Heart left ventricle (tissue), 16 donors: ENCODE measurements at regions of chr15 and their contacts with region 1.

Region 1: DNA sequence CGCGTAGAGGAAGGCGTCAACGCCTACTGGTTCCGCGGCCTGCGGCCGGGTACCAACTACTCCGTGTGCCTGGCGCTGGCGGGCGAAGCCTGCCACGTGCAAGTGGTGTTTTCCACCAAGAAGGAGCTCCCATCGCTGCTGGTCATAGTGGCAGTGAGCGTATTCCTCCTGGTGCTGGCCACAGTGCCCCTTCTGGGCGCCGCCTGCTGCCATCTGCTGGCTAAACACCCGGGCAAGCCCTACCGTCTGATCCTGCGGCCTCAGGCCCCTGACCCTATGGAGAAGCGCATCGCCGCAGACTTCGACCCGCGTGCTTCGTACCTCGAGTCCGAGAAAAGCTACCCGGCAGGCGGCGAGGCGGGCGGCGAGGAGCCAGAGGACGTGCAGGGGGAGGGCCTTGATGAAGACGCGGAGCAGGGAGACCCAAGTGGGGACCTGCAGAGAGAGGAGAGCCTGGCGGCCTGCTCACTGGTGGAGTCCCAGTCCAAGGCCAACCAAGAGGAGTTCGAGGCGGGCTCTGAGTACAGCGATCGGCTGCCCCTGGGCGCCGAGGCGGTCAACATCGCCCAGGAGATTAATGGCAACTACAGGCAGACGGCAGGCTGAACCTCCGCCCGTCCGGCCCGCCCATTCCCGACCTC is 4.1 kb downstream of the ISLR2 start:
- DNase-seq: peak; percentile 34 to 68 (median 54)
- ATAC-seq: peak in 2 of 4 donors; percentile 42 to 44
- H3K4me3 ChIP-seq: no peak overlapping the region
- H3K27ac ChIP-seq: peak overlapping the region in 2 of 12 donors; percentile 73 to 97
- H3K4me1 ChIP-seq: peaks cover 0 to 68% (median 32%) of the 10 kb centered on the region in 12 donors
- H3K27me3 ChIP-seq: peaks cover 9 to 96% (median 56%) of the 10 kb centered on the region in 9 donors
- CTCF ChIP-seq: peak; percentile 17 to 59 (median 40)
- POLR2A ChIP-seq: no peak

Region 2: GRCh38 chr15:73972984-73973682 is 161.4 kb before region 1 on chr15:
- intact Hi-C with region 1: loop called in 6 of 10 experiments (anchors 5 to 10 kb)
- DNase-seq: peak; percentile 83 to 90 (median 87)
- ATAC-seq: peak; percentile 85 to 95 (median 92)
- H3K4me3 ChIP-seq: peak overlapping the region in 9 of 12 donors; percentile 12 to 43 (median 32)
- H3K27ac ChIP-seq: peak overlapping the region in 1 of 12 donors; percentile 13
- H3K4me1 ChIP-seq: peaks cover 0 to 12% (median 8%) of the 10 kb centered on the region in 12 donors
- H3K27me3 ChIP-seq: peaks cover 0 to 6% (median 0%) of the 10 kb centered on the region in 9 donors
- CTCF ChIP-seq: peak; percentile 69 to 94 (median 84)
- POLR2A ChIP-seq: no peak

Region 3: DNA sequence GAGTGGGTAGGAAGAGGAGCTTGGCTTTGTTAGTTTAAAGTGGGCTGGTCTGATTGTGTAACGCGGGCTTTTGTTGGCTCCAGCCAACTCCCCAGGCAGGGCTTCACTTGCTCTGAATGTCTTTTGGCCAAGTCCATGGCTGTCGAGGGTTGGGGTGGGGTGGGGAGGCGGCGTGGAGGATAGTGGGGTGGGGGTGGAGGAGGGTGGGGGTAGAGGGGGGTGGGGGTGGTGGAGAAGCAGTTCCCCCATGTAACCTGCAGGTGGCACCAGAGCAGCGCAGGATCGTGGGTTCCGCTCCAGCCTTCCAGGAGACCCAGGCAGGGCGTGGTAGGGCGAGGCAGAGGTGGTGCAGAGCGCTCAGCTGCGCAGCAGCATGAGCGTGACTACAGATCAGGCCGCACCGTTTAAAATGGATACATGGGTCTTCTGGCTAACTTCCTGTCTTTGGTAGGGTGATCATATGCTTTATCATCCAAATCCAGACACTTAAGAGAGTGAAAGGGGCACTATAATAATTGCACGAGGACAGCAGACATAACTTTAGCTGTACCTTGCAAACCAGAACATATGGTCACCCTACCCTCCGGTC is 80.5 kb before region 1 on chr15:
- intact Hi-C with region 1: loop called in 2 of 10 experiments (anchors 5 to 10 kb)
- DNase-seq: peak; percentile 68 to 88 (median 77)
- ATAC-seq: peak; percentile 46 to 85 (median 72)
- H3K4me3 ChIP-seq: peak overlapping the region in 2 of 12 donors; percentile 25 to 32
- H3K27ac ChIP-seq: peak overlapping the region in 3 of 12 donors; percentile 29 to 52 (median 48)
- H3K4me1 ChIP-seq: peaks cover 0 to 38% (median 24%) of the 10 kb centered on the region in 12 donors
- H3K27me3 ChIP-seq: no peaks in the 10 kb centered on the region
- CTCF ChIP-seq: peak; percentile 38 to 84 (median 59)
- POLR2A ChIP-seq: no peak

Region 4: DNA sequence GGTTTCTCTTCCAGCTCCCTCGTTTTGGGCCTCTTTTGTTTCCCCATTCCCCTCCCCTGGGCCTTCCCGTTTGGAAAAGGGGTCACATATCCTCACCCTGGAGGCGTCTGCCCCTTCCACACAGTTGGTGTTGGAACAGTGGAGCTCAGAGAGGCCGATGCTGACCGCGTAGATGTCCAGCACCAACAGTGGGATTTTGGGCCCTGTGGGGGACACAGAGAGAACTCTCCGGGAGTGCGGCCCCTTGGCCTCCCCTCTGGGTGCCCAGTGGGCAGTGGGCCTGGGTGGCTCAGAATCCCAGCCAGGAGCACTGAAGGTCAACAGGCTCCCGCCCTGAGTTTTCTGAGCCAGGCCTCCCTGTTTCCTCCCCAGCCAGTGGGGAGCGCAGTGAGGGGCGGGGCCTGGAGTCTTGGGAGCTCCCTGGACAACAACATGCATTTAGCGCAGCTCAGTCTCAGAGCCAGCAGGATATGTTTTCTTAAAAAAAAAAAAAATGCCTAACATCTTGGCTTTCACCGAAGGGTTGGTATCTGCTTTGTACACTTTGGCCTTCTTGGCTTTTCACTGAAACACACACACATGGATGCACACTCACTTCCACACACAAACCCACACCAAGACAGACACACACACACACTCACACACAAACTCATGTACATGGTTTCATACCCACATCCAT is 38.3 kb after region 1 on chr15:
- intact Hi-C with region 1: loop called in 6 of 10 experiments (anchors 2 to 5 kb)
- DNase-seq: peak; percentile 75 to 88 (median 84)
- ATAC-seq: peak; percentile 65 to 84 (median 68)
- H3K4me3 ChIP-seq: peak overlapping the region in 5 of 12 donors; percentile 44 to 57 (median 54)
- H3K27ac ChIP-seq: peak overlapping the region; percentile 49 to 94 (median 84)
- H3K4me1 ChIP-seq: peaks cover 0 to 86% (median 44%) of the 10 kb centered on the region in 12 donors
- H3K27me3 ChIP-seq: no peaks in the 10 kb centered on the region
- CTCF ChIP-seq: peak in 2 of 12 donors; percentile 16 to 33
- POLR2A ChIP-seq: no peak

Region 5: GRCh38 chr15:74179341-74179841 is 44.9 kb after region 1 on chr15:
- intact Hi-C with region 1: loop called in 7 of 10 experiments (anchors 1 to 5 kb)
- DNase-seq: peak; percentile 79 to 90 (median 88)
- ATAC-seq: peak; percentile 73 to 91 (median 88)
- H3K4me3 ChIP-seq: peak overlapping the region in 1 of 12 donors; percentile 9
- H3K27ac ChIP-seq: peak overlapping the region; percentile 28 to 88 (median 68)
- H3K4me1 ChIP-seq: peaks cover 0 to 63% (median 45%) of the 10 kb centered on the region in 12 donors
- H3K27me3 ChIP-seq: no peaks in the 10 kb centered on the region
- CTCF ChIP-seq: no peak
- POLR2A ChIP-seq: no peak

Region 6: DNA sequence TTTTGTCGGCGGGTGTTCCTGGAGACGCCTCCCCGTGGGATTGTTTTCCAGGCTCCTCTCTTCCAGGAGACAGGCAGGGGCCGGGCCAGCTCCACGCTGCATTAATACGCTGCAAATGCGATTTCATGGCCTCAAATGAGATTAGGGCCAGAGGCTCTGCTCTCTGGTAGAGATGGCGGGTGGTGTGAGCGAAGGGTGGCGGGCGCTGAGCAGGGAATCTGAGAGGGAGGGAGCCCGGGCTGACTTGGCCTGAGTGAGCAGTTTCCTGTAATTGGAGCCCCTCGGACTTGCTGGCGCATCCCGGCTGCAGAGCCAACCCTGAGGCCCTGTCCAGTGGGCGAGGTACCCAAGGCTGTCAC is 94.2 kb after region 1 on chr15:
- intact Hi-C with region 1: loop called in 1 of 10 experiments (anchors 10 kb)
- DNase-seq: peak in 1 of 5 donors; percentile 16
- ATAC-seq: peak in 2 of 4 donors; percentile 22 to 30
- H3K4me3 ChIP-seq: peak overlapping the region in 4 of 12 donors; percentile 11 to 28 (median 20)
- H3K27ac ChIP-seq: peak overlapping the region in 5 of 12 donors; percentile 10 to 64 (median 24)
- H3K4me1 ChIP-seq: peaks cover 0 to 17% (median 12%) of the 10 kb centered on the region in 12 donors
- H3K27me3 ChIP-seq: peaks cover 0 to 4% (median 0%) of the 10 kb centered on the region in 9 donors
- CTCF ChIP-seq: no peak
- POLR2A ChIP-seq: no peak

Region 7: GRCh38 chr15:74240002-74240568 is 105.6 kb after region 1 on chr15:
- intact Hi-C with region 1: loop called in 3 of 10 experiments (anchors 5 kb)
- DNase-seq: peak; percentile 86 to 95 (median 91)
- ATAC-seq: peak; percentile 81 to 91 (median 86)
- H3K4me3 ChIP-seq: no peak overlapping the region
- H3K27ac ChIP-seq: peak overlapping the region in 11 of 12 donors; percentile 24 to 76 (median 42)
- H3K4me1 ChIP-seq: peaks cover 0 to 41% (median 28%) of the 10 kb centered on the region in 12 donors
- H3K27me3 ChIP-seq: peaks cover 0 to 2% (median 0%) of the 10 kb centered on the region in 9 donors
- CTCF ChIP-seq: peak; percentile 32 to 69 (median 52)
- POLR2A ChIP-seq: no peak